Gastrocnemius medialis (tissue), 4 donors: ENCODE measurements at regions of chr5 and their contacts with region 1.

Region 1: GRCh38 chr5:133111299-133111698 is 59.5 kb downstream of the HSPA4 start:
- DNase-seq: peak; percentile 63 to 80
- ATAC-seq: peak; percentile 73 to 83
- H3K4me3 ChIP-seq: no peak overlapping the region
- H3K27ac ChIP-seq: no peak overlapping the region
- H3K4me1 ChIP-seq: peaks cover 21 to 26% of the 10 kb centered on the region in 2 donors
- H3K27me3 ChIP-seq: no peaks in the 10 kb centered on the region
- CTCF ChIP-seq: peak; percentile 89 to 94 (median 92)
- POLR2A ChIP-seq: no peak

Region 2: GRCh38 chr5:133145436-133146170 is 34.3 kb after region 1 on chr5:
- in situ Hi-C with region 1: no loop called
- intact Hi-C with region 1: no loop called
- DNase-seq: no peak
- ATAC-seq: no peak
- H3K4me3 ChIP-seq: no peak overlapping the region
- H3K27ac ChIP-seq: no peak overlapping the region
- H3K4me1 ChIP-seq: no peaks in the 10 kb centered on the region
- H3K27me3 ChIP-seq: no peaks in the 10 kb centered on the region
- CTCF ChIP-seq: no peak
- POLR2A ChIP-seq: no peak

Region 3: DNA sequence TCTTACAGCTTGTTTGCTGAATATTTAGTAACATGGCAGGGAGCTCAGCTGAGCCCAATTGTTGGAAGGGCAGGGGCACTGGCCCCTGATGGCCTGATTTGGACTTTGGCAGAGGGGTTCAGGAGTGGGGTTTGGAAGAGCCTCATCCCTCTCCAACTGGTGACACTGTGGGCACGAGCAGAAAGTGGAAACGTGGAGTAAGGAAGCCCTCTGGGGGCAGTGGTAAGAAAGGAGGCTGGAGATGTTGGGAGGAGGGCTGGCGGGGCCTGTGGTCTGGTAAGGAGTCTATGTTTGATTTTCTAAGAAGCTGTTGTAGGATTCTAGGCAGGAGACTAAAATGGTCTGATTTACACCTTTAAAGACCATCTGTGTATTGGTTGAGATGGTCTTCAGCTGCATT is 149.4 kb after region 1 on chr5:
- in situ Hi-C with region 1: no loop called
- intact Hi-C with region 1: loop called (anchors 1 kb)
- DNase-seq: no peak
- ATAC-seq: peak in 1 of 2 donors; percentile 43
- H3K4me3 ChIP-seq: no peak overlapping the region
- H3K27ac ChIP-seq: no peak overlapping the region
- H3K4me1 ChIP-seq: peaks cover 18 to 21% of the 10 kb centered on the region in 2 donors
- H3K27me3 ChIP-seq: no peaks in the 10 kb centered on the region
- CTCF ChIP-seq: peak in 2 of 5 experiments; percentile 29 to 37
- POLR2A ChIP-seq: no peak

Region 4: GRCh38 chr5:134659456-134659855 is 1548.2 kb after region 1 on chr5:
- in situ Hi-C with region 1: no loop called
- intact Hi-C with region 1: no loop called
- DNase-seq: no peak
- ATAC-seq: no peak
- H3K4me3 ChIP-seq: no peak overlapping the region
- H3K27ac ChIP-seq: no peak overlapping the region
- H3K4me1 ChIP-seq: no peaks in the 10 kb centered on the region
- H3K27me3 ChIP-seq: no peaks in the 10 kb centered on the region
- CTCF ChIP-seq: no peak
- POLR2A ChIP-seq: no peak